ENCODE measurements at regions of chr5 and their contacts with region 1.

Region 1: GRCh38 chr5:103258368-103258956 is at the start of gene MACIR:
- DNase-seq: peak; percentile 99
- ATAC-seq: peak; percentile 85
- H3K4me3 ChIP-seq: peak within 1 kb of the TSS; percentile 93
- H3K27ac ChIP-seq: peak within 1 kb of the TSS; percentile 63
- H3K4me1 ChIP-seq: peaks cover 34% of the 10 kb centered on the region
- H3K27me3 ChIP-seq: no peaks in the 10 kb centered on the region
- CTCF ChIP-seq: 0 out of 2 replicates have a peak, but pooled peaks have one; percentile 9
- total RNA-seq, gene MACIR: 15.1 and 22.2 TPM in 2 replicates

Region 2: GRCh38 chr5:103211576-103212561 is 46.6 kb before region 1 on chr5:
- CTCF ChIA-PET with region 1: no interaction called
- POLR2A ChIA-PET with region 1: interaction called, 10 read pairs
- intact Hi-C with region 1: no loop called
- DNase-seq: no peak
- ATAC-seq: no peak
- H3K4me3 ChIP-seq: no peak overlapping the region
- H3K27ac ChIP-seq: no peak overlapping the region
- H3K4me1 ChIP-seq: 0 out of 2 replicates have a peak, but pooled peaks cover 3% of the 10 kb centered on the region
- H3K27me3 ChIP-seq: no peaks in the 10 kb centered on the region
- CTCF ChIP-seq: no peak

Region 3: DNA sequence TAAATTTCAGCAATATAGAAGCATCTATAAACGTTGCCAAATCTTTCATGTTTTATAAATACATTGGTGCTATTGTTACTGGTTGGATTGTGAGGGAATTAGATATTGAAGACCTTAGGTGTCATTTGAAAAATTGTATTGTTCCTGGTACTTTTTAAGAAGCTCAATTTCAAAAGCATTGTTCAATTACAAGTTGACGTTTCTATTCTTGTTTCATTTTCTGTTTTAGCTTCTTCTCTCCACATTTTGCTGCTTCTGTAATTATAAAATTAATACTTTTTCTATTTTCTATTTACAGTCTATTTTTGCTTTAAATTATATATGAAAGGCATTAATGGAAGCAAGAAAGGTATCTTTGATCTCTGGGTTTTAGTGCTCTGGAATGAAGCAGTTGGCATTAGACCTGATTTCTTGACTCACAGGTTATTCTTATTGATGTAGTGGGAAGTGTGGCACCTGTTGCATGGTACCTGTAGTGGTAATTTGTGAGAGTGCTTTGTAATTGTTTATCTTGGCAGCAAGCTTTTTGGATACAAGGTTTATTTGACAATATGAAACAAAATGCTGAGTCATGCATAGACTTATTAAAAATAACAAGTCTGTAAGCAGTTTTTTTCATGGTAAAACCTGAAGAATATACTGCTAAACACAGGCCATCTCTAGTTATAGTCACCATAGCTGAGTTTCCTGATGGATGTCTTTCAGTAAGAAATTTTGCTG is 13.3 kb after region 1 on chr5:
- CTCF ChIA-PET with region 1: interaction called, 10 read pairs
- POLR2A ChIA-PET with region 1: interaction called, 16 read pairs
- intact Hi-C with region 1: loop called (anchors 1 kb)
- DNase-seq: peak; percentile 93
- ATAC-seq: peak; percentile 76
- H3K4me3 ChIP-seq: no peak overlapping the region
- H3K27ac ChIP-seq: peak overlapping the region; percentile 23
- H3K4me1 ChIP-seq: peaks cover 41% of the 10 kb centered on the region
- H3K27me3 ChIP-seq: no peaks in the 10 kb centered on the region
- CTCF ChIP-seq: no peak

Region 4: DNA sequence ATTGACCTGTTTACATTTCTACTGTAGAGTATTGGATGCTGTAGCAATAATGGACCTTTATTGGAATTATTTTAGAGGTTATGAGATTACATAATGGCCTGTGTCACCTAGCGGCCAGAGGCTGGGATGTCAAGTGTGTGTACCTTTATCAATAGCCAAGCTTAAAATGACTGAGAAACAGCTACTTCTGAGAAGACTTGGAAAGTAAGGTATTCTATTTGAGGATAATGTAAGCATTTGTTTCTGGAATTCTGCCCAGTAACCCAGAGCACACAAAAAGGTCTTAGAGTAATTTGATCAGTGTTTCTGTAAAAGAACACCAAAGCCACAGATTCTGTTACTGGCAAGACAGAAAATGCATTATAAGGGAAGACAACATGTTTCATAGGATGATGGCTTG is 116.9 kb after region 1 on chr5:
- CTCF ChIA-PET with region 1: interaction called, 6 read pairs
- POLR2A ChIA-PET with region 1: no interaction called
- intact Hi-C with region 1: loop called (anchors 5 kb)
- DNase-seq: peak; percentile 77
- ATAC-seq: peak; percentile 82
- H3K4me3 ChIP-seq: no peak overlapping the region
- H3K27ac ChIP-seq: no peak overlapping the region
- H3K4me1 ChIP-seq: peaks cover 16% of the 10 kb centered on the region
- H3K27me3 ChIP-seq: no peaks in the 10 kb centered on the region
- CTCF ChIP-seq: peak; percentile 71

Region 5: GRCh38 chr5:103410172-103410571 is 151.7 kb after region 1 on chr5:
- CTCF ChIA-PET with region 1: no interaction called
- POLR2A ChIA-PET with region 1: no interaction called
- intact Hi-C with region 1: no loop called
- DNase-seq: no peak
- ATAC-seq: no peak
- H3K4me3 ChIP-seq: no peak overlapping the region
- H3K27ac ChIP-seq: no peak overlapping the region
- H3K4me1 ChIP-seq: no peaks in the 10 kb centered on the region
- H3K27me3 ChIP-seq: no peaks in the 10 kb centered on the region
- CTCF ChIP-seq: no peak

Region 6: DNA sequence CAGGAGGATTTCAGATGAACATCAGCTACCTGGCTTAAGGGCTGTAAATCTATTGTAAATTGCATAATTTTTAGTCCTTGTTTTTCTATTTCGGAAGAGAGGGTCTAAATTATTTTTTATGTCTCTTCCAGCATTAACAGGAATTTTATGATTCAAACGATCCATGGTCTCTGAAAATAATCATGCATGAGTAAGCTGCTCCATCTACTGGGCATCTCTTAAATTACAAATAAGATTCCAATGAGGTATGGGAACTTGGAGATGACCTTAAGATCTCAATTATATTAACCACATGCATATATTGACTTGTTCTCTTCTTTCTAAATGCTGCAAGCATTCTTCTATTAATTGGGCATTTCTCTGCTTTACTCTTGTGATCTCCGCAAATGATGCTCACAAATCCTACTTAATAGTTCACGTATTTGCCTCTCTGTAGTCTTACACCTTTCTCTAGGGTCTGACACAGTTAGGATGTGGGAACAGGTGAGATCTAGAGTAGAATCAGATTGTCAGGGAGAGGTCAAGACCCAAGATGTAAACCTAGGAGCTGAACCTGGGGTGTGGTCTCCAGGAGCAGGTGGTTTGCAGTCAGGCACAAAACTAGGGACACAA is 217.3 kb after region 1 on chr5:
- CTCF ChIA-PET with region 1: interaction called, 22 read pairs
- POLR2A ChIA-PET with region 1: no interaction called
- intact Hi-C with region 1: loop called (anchors 1 kb)
- DNase-seq: peak; percentile 91
- ATAC-seq: peak; percentile 61
- H3K4me3 ChIP-seq: no peak overlapping the region
- H3K27ac ChIP-seq: no peak overlapping the region
- H3K4me1 ChIP-seq: peaks cover 23% of the 10 kb centered on the region
- H3K27me3 ChIP-seq: no peaks in the 10 kb centered on the region
- CTCF ChIP-seq: peak; percentile 95